CD4-positive, alpha-beta memory T cell (primary cell): ENCODE measurements at regions of chr11 and their contacts with region 1.

Region 1: GRCh38 chr11:44574610-44575287 is 9.3 kb downstream of the CD82 start:
- DNase-seq: peak; percentile 32 to 79 (median 43)
- H3K4me3 ChIP-seq: peak overlapping the region in 1 of 2 donors; percentile 21
- H3K4me3 Mint-ChIP-seq: peak overlapping the region; percentile 71 to 87 (median 81)
- H3K27ac ChIP-seq: peak overlapping the region; percentile 52
- H3K27ac Mint-ChIP-seq: peak overlapping the region; percentile 87 to 96 (median 90)
- H3K4me1 ChIP-seq: peaks cover 100% of the 10 kb centered on the region
- H3K4me1 Mint-ChIP-seq: peaks cover 74 to 99% (median 89%) of the 10 kb centered on the region in 4 donors
- H3K27me3 ChIP-seq: no peaks in the 10 kb centered on the region
- H3K27me3 Mint-ChIP-seq: no peaks in the 10 kb centered on the region

Region 2: GRCh38 chr11:44585421-44585820 is 10.7 kb after region 1 on chr11:
- CTCF ChIA-PET with region 1: interaction called, 5 read pairs
- POLR2A ChIA-PET with region 1: interaction called, 287 read pairs
- intact Hi-C with region 1: loop called (anchors 2 kb)
- DNase-seq: no peak
- H3K4me3 ChIP-seq: no peak overlapping the region
- H3K4me3 Mint-ChIP-seq: no peak overlapping the region
- H3K27ac ChIP-seq: no peak overlapping the region
- H3K27ac Mint-ChIP-seq: peak overlapping the region in 5 of 7 donors; percentile 64 to 78 (median 68)
- H3K4me1 ChIP-seq: peaks cover 59% of the 10 kb centered on the region
- H3K4me1 Mint-ChIP-seq: peaks cover 30 to 89% (median 47%) of the 10 kb centered on the region in 4 donors
- H3K27me3 ChIP-seq: no peaks in the 10 kb centered on the region
- H3K27me3 Mint-ChIP-seq: no peaks in the 10 kb centered on the region

Region 3: GRCh38 chr11:44611687-44612434 is 37.1 kb after region 1 on chr11:
- CTCF ChIA-PET with region 1: interaction called, 699 read pairs
- POLR2A ChIA-PET with region 1: interaction called, 397 read pairs
- intact Hi-C with region 1: no loop called
- DNase-seq: peak; percentile 75 to 94 (median 77)
- H3K4me3 ChIP-seq: no peak overlapping the region
- H3K4me3 Mint-ChIP-seq: peak overlapping the region in 7 of 8 donors; percentile 22 to 70 (median 52)
- H3K27ac ChIP-seq: peak overlapping the region; percentile 53
- H3K27ac Mint-ChIP-seq: peak overlapping the region; percentile 83 to 96 (median 92)
- H3K4me1 ChIP-seq: peaks cover 100% of the 10 kb centered on the region
- H3K4me1 Mint-ChIP-seq: peaks cover 54 to 100% (median 80%) of the 10 kb centered on the region in 4 donors
- H3K27me3 ChIP-seq: no peaks in the 10 kb centered on the region
- H3K27me3 Mint-ChIP-seq: no peaks in the 10 kb centered on the region

Region 4: DNA sequence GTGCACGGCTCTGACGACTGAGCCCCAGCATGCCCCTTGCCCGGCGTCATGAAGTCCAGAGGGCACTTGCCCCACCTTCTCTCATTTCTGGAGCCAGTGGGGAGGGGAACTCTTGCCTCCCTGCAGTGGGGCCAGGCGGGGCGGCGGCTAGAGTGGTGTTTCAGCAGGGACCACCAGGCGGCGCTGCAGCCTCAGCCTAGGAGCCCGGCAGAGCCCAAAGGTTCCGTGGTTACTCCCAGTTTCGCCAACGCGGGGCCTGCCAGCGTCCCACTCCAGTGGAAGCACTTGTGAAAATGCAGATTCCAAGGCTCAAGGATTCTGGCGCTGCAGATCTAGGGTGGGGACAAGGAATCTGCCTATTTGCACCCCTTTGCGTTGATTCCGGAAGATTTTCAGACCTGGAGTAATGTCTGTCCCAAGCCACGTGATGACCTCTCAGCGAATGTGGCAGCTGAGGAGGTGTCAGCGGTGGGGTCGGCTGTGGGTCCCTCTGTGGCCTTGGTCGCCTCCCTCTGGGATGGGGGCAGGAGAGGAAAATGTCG is 46.5 kb after region 1 on chr11:
- CTCF ChIA-PET with region 1: interaction called, 699 read pairs
- POLR2A ChIA-PET with region 1: interaction called, 397 read pairs
- intact Hi-C with region 1: no loop called
- DNase-seq: peak; percentile 55 to 64 (median 57)
- H3K4me3 ChIP-seq: no peak overlapping the region
- H3K4me3 Mint-ChIP-seq: peak overlapping the region in 1 of 8 donors; percentile 25
- H3K27ac ChIP-seq: no peak overlapping the region
- H3K27ac Mint-ChIP-seq: peak overlapping the region in 5 of 7 donors; percentile 25 to 52 (median 41)
- H3K4me1 ChIP-seq: peaks cover 28% of the 10 kb centered on the region
- H3K4me1 Mint-ChIP-seq: peaks cover 18 to 62% (median 42%) of the 10 kb centered on the region in 4 donors
- H3K27me3 ChIP-seq: no peaks in the 10 kb centered on the region
- H3K27me3 Mint-ChIP-seq: no peaks in the 10 kb centered on the region